ENCODE measurements at regions of chr10 and their contacts with region 1.

Region 1: GRCh38 chr10:101012525-101013364 is 13.1 kb downstream of the LZTS2 start:
- DNase-seq: peak; percentile 94 to 96
- ATAC-seq: peak; percentile 90
- H3K4me3 ChIP-seq: no peak overlapping the region
- H3K27ac ChIP-seq: no peak overlapping the region
- H3K4me1 ChIP-seq: no peaks in the 10 kb centered on the region
- H3K27me3 ChIP-seq: no peaks in the 10 kb centered on the region

Region 2: GRCh38 chr10:100960251-100960650 is 52.5 kb before region 1 on chr10:
- intact Hi-C with region 1: no loop called
- DNase-seq: no peak
- ATAC-seq: no peak
- H3K4me3 ChIP-seq: no peak overlapping the region
- H3K27ac ChIP-seq: no peak overlapping the region
- H3K4me1 ChIP-seq: no peaks in the 10 kb centered on the region
- H3K27me3 ChIP-seq: no peaks in the 10 kb centered on the region

Region 3: DNA sequence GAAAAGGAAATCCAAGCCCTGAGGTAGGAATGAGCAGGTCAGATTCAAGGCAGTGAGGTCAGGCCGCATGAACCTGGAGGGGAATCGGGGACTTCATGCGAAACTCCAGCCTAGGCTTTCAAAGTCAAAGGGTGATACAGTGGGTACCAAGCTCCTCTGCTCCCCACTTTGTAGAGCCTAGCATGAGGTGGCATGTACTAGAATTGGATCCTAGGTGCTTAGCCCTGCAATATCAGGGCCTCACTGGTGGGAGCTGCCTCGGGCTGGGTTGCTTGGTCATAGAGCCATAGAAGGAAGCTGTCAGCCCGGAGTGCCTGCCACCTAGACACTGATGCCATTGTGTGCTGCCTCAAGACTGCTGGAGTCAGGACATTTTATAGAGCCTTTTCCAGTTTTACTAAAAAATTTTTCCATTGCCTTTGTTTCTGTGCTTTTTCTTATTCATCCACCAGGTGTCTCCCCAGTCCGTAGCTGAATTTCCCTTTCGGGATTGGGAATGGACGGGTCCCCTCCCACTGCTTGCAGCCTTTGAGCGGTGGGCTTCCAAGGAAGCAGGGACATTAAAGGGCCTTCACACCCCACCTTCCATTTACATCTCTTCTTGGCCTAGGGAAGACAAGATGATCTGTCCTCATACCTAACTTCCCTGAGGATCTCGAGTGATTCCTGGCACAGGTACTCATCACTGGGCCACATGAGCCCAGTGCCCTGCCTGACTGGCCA is 18.6 kb before region 1 on chr10:
- intact Hi-C with region 1: loop called (anchors 1 to 2 kb)
- DNase-seq: peak in 1 of 2 donors; percentile 36
- ATAC-seq: no peak
- H3K4me3 ChIP-seq: no peak overlapping the region
- H3K27ac ChIP-seq: no peak overlapping the region
- H3K4me1 ChIP-seq: no peaks in the 10 kb centered on the region
- H3K27me3 ChIP-seq: no peaks in the 10 kb centered on the region

Region 4: GRCh38 chr10:100998991-100999741 is 13.6 kb before region 1 on chr10:
- intact Hi-C with region 1: loop called (anchors 1 to 2 kb)
- DNase-seq: peak; percentile 91 to 95
- ATAC-seq: peak; percentile 90
- H3K4me3 ChIP-seq: peak overlapping the region; percentile 69
- H3K27ac ChIP-seq: peak overlapping the region; percentile 85 to 99
- H3K4me1 ChIP-seq: no peaks in the 10 kb centered on the region
- H3K27me3 ChIP-seq: no peaks in the 10 kb centered on the region

Measured in aorta (tissue), 5 donors.